ENCODE measurements at regions of chr22 and their contacts with region 1.

Region 1: DNA sequence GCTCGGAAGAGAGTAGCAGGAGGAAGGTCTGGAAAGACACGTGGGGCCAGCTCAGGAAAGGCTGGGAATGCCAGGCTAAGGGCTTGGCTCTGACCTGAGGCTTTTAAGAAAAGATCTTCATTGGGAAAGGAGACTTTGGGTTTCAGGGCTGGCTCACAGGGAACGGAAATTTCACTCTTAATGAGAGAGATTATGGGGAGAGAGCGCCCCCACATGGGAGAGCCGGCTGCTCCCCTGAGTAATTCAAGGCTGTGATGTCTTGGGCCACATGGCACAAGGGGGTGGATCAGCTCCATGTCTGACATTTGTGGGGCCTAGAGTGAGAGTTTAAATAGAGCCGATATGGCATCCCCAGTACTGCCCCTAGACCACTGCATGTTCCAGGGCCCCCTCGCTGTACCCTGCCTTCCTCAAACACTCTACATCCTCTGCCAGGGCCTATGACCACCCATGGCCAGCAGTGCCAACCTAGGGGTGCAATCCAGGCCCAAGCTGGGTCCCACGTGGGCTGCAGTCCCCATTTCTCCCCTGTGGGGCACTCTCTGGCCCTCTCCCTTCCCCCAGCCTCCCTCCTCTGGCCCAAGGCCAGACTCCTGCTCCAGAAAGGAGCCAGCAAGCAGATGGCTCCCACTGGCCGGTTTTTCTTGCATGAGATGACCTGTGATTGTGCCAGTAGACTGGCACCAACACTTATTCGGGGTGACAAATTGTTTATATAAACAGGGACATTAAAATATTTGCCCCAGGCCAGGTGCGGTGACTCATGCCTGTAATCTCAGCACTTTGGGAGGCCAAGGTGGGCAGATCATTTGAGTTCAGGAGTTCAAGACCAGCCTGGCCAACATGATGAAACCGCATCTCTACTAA is 75.2 kb downstream of the ISX start:
- DNase-seq: no peak
- ATAC-seq: peak; percentile 89
- H3K4me3 ChIP-seq: no peak overlapping the region
- H3K27ac ChIP-seq: peak overlapping the region; percentile 46
- H3K4me1 ChIP-seq: peaks cover 17% of the 10 kb centered on the region
- H3K27me3 ChIP-seq: no peaks in the 10 kb centered on the region
- CTCF ChIP-seq: peak; percentile 61 to 75 (median 68)
- EP300 ChIP-seq: no peak
- POLR2A ChIP-seq: no peak
- RAD21 ChIP-seq: peak; percentile 86

Region 2: DNA sequence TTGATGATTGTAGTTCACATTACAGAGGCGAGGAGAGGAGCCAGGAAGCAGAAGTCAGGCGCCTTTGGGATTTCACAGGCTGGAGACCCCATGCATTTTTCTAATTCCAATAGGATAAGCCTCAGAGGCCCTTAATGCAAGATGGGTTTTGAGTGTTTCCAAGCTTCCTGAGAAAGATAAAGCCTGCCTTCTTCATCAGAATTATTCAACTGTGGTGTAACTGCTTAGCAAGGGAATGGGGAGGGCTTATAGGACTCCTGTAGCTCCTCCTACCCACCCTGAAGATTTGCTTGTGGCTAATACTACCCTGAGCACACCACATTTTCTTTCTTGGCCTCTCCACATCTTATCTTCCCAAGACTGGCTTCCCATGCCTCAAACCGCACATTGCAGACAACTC is 226.3 kb before region 1 on chr22:
- CTCF ChIA-PET with region 1: no interaction called
- POLR2A ChIA-PET with region 1: no interaction called
- RAD21 ChIA-PET with region 1: no interaction called
- SMC1A ChIA-PET with region 1: no interaction called
- in situ Hi-C with region 1: no loop called
- intact Hi-C with region 1: no loop called
- DNase-seq: no peak
- ATAC-seq: no peak
- H3K4me3 ChIP-seq: no peak overlapping the region
- H3K27ac ChIP-seq: no peak overlapping the region
- H3K4me1 ChIP-seq: no peaks in the 10 kb centered on the region
- H3K27me3 ChIP-seq: no peaks in the 10 kb centered on the region; a peak in 1 of 4 replicates
- CTCF ChIP-seq: no peak
- EP300 ChIP-seq: no peak
- POLR2A ChIP-seq: no peak
- RAD21 ChIP-seq: no peak

Region 3: DNA sequence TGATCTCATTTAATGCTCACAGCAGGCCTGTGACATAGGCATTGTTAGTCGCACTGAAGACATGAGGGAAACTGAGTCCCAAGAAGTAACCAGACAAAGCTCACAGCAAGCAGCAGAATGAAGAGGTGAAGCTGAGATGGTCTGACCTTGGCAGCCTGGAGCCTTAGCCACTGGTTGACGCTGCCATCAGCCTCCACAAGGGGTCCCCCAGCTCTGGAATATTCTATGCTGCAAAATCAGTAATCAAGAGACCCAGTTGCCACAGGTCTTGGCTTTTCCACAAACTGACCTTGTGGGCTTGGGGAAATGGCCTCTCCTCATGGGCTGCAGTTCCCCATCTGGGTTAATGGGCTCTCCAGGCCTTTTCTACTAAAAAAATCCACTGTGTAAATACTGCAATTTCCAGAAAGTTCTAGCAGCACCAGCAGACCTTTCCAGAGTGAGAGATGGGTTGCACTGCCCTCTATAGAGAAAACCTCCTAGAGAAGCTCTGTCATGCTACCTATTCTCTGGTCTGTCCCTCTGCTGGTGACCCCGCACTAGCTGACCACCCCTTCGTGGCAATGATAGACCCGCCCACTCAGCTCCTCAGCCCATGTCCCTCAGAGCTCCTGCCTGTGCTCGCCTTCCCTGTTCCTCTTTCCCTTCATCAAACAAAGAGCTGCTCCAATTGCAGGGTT is 97.7 kb before region 1 on chr22:
- CTCF ChIA-PET with region 1: interaction called, 69 read pairs
- POLR2A ChIA-PET with region 1: no interaction called
- RAD21 ChIA-PET with region 1: interaction called, 24 read pairs
- SMC1A ChIA-PET with region 1: interaction called, 37 read pairs
- in situ Hi-C with region 1: loop called (anchors 5 kb)
- intact Hi-C with region 1: loop called (anchors 1 kb)
- DNase-seq: no peak
- ATAC-seq: peak; percentile 85
- H3K4me3 ChIP-seq: no peak overlapping the region
- H3K27ac ChIP-seq: no peak overlapping the region
- H3K4me1 ChIP-seq: peaks cover 21% of the 10 kb centered on the region
- H3K27me3 ChIP-seq: no peaks in the 10 kb centered on the region
- CTCF ChIP-seq: peak; percentile 44 to 51 (median 48)
- EP300 ChIP-seq: no peak
- POLR2A ChIP-seq: no peak
- RAD21 ChIP-seq: peak; percentile 76

Measured in GM12878 (cell line).